Activated T-helper 2 cell treated with anti-CD3 and anti-CD28 coated beads, Interferon-gamma antibody, Interleukin-2, Interleukin-4, amounts not matched to agents 10 μg/mL and 5 μg/mL and 100 μg/mL, durations not matched to agents 14 hours and 24 hours and 36 hours (primary cell): ENCODE measurements at regions of chr15 and their contacts with region 1.

Region 1: DNA sequence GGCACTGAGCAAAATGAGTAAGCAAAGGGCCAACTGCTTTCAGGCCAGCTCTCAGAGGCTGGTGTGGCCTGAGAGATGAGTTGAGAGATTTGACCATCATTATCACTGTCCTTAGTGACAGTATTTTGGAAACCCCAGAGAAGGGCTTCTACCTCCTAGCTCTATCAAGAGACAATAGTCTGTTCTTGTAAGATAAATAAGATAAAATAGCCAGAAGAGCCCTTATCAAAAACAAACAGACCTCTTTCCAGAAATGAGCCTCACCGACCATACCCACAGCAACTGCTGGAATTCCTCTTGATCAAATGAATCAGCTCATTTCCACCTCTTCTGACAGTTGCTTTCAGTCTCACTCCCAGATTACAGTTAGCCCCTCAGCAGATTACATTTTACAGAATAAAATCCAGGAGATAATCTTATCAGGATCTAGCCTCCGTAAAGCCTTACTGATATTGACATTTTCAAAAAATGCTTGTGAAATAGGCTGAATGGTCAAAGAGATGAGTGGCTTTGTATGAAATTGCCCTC is 4.5 kb downstream of the HDC start:
- DNase-seq: no peak
- H3K4me3 Mint-ChIP-seq: peak overlapping the region; percentile 64
- H3K27ac Mint-ChIP-seq: peak overlapping the region; percentile 98
- H3K4me1 Mint-ChIP-seq: peaks cover 76% of the 10 kb centered on the region
- H3K27me3 Mint-ChIP-seq: no peaks in the 10 kb centered on the region

Region 2: DNA sequence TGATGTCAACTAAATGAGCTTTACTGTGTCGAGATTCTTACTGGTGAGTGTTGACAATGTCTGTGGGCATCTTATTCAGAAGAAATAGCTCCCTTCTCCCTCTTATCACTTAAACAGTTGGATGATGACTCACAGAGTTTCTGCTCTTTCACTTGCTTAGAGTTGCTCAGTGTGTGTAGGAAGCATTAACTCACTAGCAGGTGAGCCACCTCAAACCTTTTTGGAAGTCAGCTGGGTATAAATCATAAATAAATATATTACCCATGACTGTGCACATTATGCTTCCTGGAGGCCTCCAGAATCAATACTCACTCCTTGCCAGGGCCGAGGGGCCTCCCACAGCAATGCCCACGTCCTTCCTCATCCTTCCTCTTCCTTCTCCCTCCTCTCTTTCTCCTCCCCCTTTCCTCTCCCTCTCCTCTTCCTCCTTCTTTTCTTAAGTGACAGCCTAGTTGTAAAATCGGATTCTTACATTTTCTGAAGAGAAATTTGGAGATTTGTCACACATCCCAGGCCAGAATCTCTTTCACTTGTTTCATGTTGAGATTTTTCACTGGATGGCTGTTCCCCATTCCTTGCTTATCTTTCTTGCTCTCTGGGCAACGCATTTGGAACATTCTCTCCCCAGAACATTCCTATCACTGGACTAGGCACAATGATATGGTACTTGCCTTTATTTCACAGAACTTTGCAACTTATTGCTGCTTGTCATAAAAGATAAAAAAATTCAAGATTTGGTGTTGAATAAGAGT is 1314.8 kb before region 1 on chr15:
- intact Hi-C with region 1: loop called (anchors 5 kb)
- DNase-seq: no peak
- H3K4me3 Mint-ChIP-seq: no peak overlapping the region
- H3K27ac Mint-ChIP-seq: peak overlapping the region; percentile 86
- H3K4me1 Mint-ChIP-seq: peaks cover 34% of the 10 kb centered on the region
- H3K27me3 Mint-ChIP-seq: no peaks in the 10 kb centered on the region

Region 3: DNA sequence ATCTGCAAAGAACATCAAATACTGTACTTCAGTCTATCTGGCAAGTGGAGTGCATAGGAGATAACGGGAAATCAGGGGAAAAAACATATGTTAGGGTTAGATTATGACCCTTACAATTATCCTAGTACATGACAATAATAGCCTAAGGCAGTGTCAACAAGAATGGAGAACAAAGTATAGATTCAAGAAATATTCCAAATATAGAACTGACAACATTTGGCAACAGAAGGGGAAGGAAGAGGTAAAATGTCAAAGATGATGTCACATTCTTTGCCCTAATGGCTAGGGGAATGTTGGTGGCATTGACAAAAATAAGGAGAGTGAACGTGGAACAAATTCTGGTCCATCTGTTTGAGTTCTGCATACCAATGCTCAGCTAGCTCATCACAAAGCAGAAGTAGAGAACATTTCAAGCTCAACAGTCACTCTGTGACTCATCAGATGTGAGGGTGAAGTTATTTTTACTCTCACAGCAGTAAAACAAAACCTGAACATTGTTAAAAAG is 126.5 kb before region 1 on chr15:
- intact Hi-C with region 1: loop called (anchors 1 kb)
- DNase-seq: no peak
- H3K4me3 Mint-ChIP-seq: peak overlapping the region; percentile 41
- H3K27ac Mint-ChIP-seq: peak overlapping the region; percentile 91
- H3K4me1 Mint-ChIP-seq: peaks cover 61% of the 10 kb centered on the region
- H3K27me3 Mint-ChIP-seq: no peaks in the 10 kb centered on the region

Region 4: GRCh38 chr15:50190723-50191122 is 70.3 kb before region 1 on chr15:
- intact Hi-C with region 1: loop called (anchors 2 kb)
- DNase-seq: no peak
- H3K4me3 Mint-ChIP-seq: no peak overlapping the region
- H3K27ac Mint-ChIP-seq: peak overlapping the region; percentile 60
- H3K4me1 Mint-ChIP-seq: peaks cover 47% of the 10 kb centered on the region
- H3K27me3 Mint-ChIP-seq: no peaks in the 10 kb centered on the region

Region 5: GRCh38 chr15:50315814-50316630 is 55.0 kb after region 1 on chr15:
- intact Hi-C with region 1: loop called (anchors 5 kb)
- DNase-seq: no peak
- H3K4me3 Mint-ChIP-seq: no peak overlapping the region
- H3K27ac Mint-ChIP-seq: no peak overlapping the region
- H3K4me1 Mint-ChIP-seq: peaks cover 34% of the 10 kb centered on the region
- H3K27me3 Mint-ChIP-seq: no peaks in the 10 kb centered on the region